ENCODE measurements at regions of chr4 and their contacts with region 1.

Region 1: DNA sequence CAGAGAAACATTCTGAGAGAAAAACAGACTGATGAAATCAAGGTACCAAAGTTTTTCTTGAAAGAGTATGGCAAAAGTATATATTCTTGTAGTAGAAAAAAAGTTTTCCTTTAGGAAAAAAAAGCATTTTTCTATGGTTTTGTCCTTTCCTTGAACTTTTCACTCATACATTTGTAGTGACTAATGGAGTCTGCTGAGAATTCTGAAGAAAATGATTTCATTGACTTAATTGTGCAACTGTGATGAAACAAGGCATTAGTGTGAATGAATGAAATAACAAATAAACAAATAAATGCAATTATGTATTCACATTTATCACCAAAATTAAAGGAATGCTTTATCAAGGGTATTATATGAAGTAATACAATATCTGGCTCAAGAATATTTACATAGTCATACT is 5.7 kb downstream of the CSN1S1 start:
- DNase-seq: no peak
- H3K4me3 ChIP-seq: no peak overlapping the region
- H3K4me3 Mint-ChIP-seq: no peak overlapping the region
- H3K27ac Mint-ChIP-seq: no peak overlapping the region
- H3K4me1 ChIP-seq: no peaks in the 10 kb centered on the region
- H3K4me1 Mint-ChIP-seq: no peaks in the 10 kb centered on the region
- H3K27me3 ChIP-seq: no peaks in the 10 kb centered on the region
- H3K27me3 Mint-ChIP-seq: no peaks in the 10 kb centered on the region
- CTCF ChIP-seq: no peak

Region 2: DNA sequence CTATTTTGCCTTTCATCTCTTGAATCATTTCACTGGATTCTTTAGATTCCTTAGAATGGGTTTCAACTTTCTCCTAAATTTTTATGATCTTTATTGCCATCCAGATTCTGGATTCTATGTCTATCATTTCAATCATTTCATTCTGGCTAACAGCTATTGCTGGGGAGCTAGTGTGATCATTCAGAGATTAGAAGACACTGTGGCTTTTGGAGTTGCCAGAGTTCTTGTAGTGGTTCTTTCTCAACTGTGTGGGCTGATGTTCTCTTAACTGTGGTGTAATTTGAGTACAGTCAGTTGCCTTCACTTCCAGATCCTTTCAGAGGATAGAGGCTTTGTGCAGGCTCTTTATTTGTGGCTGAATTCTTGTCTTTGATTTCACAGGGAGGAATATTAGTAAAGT is 41.0 kb after region 1 on chr4:
- CTCF ChIA-PET with region 1: no interaction called
- POLR2A ChIA-PET with region 1: no interaction called
- intact Hi-C with region 1: loop called (anchors 1 kb)
- DNase-seq: no peak
- H3K4me3 ChIP-seq: no peak overlapping the region
- H3K4me3 Mint-ChIP-seq: no peak overlapping the region
- H3K27ac Mint-ChIP-seq: no peak overlapping the region
- H3K4me1 ChIP-seq: peaks cover 2% of the 10 kb centered on the region; the same call in 1 of the 2 replicates
- H3K4me1 Mint-ChIP-seq: peaks cover 12% of the 10 kb centered on the region
- H3K27me3 ChIP-seq: no peaks in the 10 kb centered on the region
- H3K27me3 Mint-ChIP-seq: no peaks in the 10 kb centered on the region
- CTCF ChIP-seq: no peak

Region 3: DNA sequence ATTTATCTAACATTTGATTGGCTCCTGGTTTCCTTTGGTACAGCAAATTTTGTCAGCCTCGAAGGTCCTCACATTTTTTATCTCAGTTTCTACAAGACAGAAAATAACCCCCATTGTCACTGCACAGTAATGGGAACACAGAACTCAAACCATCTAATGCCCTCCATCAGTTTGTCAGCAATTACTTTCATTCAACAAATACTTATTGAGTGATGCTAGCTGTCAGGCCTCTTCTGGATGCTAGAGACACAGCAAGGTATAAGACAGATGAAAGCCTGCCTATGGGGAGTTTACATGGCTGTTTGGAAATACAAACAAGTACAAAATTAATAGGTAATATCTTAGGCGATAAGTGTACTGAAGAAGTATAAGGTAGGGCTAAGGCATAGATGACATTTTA is 86.7 kb after region 1 on chr4:
- CTCF ChIA-PET with region 1: no interaction called
- POLR2A ChIA-PET with region 1: no interaction called
- intact Hi-C with region 1: no loop called
- DNase-seq: no peak
- H3K4me3 ChIP-seq: no peak overlapping the region
- H3K4me3 Mint-ChIP-seq: no peak overlapping the region
- H3K27ac Mint-ChIP-seq: no peak overlapping the region
- H3K4me1 ChIP-seq: no peaks in the 10 kb centered on the region
- H3K4me1 Mint-ChIP-seq: peaks cover 5% of the 10 kb centered on the region
- H3K27me3 ChIP-seq: no peaks in the 10 kb centered on the region
- H3K27me3 Mint-ChIP-seq: no peaks in the 10 kb centered on the region
- CTCF ChIP-seq: no peak

Measured in Caco-2 (cell line).